CD8-positive, alpha-beta T cell (primary cell): ENCODE measurements at regions of chr4 and their contacts with region 1.

Region 1: GRCh38 chr4:140861359-140862176 is 105.4 kb upstream of the TBC1D9 start:
- DNase-seq: peak in 6 of 9 experiments; percentile 4 to 63 (median 26)
- ATAC-seq: no peak
- H3K4me3 ChIP-seq: no peak overlapping the region
- H3K4me3 Mint-ChIP-seq: no peak overlapping the region
- H3K27ac ChIP-seq: no peak overlapping the region
- H3K27ac Mint-ChIP-seq: no peak overlapping the region
- H3K4me1 ChIP-seq: no peaks in the 10 kb centered on the region
- H3K4me1 Mint-ChIP-seq: peaks cover 3% of the 10 kb centered on the region
- H3K27me3 ChIP-seq: no peaks in the 10 kb centered on the region
- H3K27me3 Mint-ChIP-seq: peaks cover 2% of the 10 kb centered on the region
- CTCF ChIP-seq: peak; percentile 42

Region 2: DNA sequence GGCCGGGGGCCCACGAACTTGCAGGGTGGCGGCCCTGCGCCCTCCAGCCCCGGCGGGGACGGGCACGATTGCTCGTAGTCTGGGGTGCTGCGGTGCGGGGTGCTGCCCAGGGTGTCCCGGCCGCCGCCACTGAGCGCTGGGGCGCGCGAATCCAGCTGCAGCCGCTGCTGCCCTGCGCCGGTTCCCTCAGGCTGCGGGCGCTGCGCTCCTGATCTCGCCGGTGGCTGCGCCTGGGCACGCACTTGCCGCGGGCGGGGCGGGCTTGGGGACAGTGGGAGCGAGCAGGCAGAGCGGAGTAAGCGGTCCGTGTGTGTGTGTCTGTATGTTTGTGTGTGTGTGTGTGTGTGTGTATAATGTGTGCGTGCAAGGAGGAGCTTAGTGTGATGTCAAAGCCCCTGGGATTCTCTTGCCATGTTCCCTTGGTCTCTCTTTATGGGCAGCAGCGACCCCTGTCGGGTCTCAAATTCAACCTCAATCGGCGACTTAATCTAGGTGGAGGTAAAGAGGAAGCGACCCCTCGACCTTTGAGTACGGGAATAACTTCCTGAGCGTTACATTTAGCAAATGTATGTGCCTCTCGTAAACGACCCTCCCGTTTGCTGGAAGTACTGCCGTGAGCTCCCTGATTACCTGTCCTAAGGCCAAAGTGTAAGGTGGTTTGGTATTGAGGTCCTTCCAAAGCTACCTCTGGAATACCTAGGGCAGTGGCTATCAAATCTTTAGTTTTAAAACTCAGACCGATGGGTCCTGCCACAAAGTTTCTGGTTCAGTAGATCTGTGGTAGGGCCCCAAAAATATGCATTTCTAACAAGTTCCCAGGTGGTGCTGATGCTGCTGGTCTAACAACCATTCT is 271.8 kb after region 1 on chr4 and contains the start of gene RNF150:
- CTCF ChIA-PET with region 1: no interaction called
- POLR2A ChIA-PET with region 1: no interaction called
- intact Hi-C with region 1: loop called in 1 of 2 experiments (anchors 5 kb)
- DNase-seq: peak in 4 of 9 experiments; percentile 7 to 48 (median 12)
- ATAC-seq: no peak
- H3K4me3 ChIP-seq: peak within 1 kb of the TSS; percentile 6 to 33
- H3K4me3 Mint-ChIP-seq: peak within 1 kb of the TSS; percentile 83
- H3K27ac ChIP-seq: no peak within 1 kb of the TSS
- H3K27ac Mint-ChIP-seq: no peak within 1 kb of the TSS
- H3K4me1 ChIP-seq: no peaks in the 10 kb centered on the region
- H3K4me1 Mint-ChIP-seq: peaks cover 11% of the 10 kb centered on the region
- H3K27me3 ChIP-seq: peaks cover 6 to 14% of the 10 kb centered on the region in 2 experiments
- H3K27me3 Mint-ChIP-seq: peaks cover 57% of the 10 kb centered on the region
- CTCF ChIP-seq: no peak
- total RNA-seq, gene RNF150: not detected

Region 3: DNA sequence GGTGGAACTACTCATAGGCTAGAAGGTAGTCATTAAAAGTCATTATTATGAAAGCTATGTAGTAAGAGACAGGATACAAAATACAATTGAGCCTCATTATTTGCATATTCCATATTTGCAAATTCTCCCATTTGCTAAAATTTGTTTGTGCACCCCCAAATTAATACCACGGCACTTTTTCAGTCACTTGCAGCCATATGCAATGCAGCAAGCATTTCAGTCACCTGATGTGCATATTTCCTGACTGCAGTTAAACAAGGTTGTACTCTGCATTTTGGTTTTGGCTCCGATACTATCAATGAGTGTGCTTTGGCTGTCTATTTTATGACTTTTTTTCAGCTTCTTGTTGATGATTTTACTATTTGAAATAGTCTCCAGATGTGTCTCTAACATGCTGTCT is 422.0 kb after region 1 on chr4:
- CTCF ChIA-PET with region 1: no interaction called
- POLR2A ChIA-PET with region 1: no interaction called
- intact Hi-C with region 1: no loop called
- DNase-seq: no peak
- ATAC-seq: no peak
- H3K4me3 ChIP-seq: no peak overlapping the region
- H3K4me3 Mint-ChIP-seq: no peak overlapping the region
- H3K27ac ChIP-seq: no peak overlapping the region
- H3K27ac Mint-ChIP-seq: no peak overlapping the region
- H3K4me1 ChIP-seq: no peaks in the 10 kb centered on the region
- H3K4me1 Mint-ChIP-seq: no peaks in the 10 kb centered on the region
- H3K27me3 ChIP-seq: no peaks in the 10 kb centered on the region
- H3K27me3 Mint-ChIP-seq: peaks cover 3% of the 10 kb centered on the region
- CTCF ChIP-seq: no peak